Gastrocnemius medialis (tissue), 4 donors: ENCODE measurements at regions of chr2 and their contacts with region 1.

Region 1: DNA sequence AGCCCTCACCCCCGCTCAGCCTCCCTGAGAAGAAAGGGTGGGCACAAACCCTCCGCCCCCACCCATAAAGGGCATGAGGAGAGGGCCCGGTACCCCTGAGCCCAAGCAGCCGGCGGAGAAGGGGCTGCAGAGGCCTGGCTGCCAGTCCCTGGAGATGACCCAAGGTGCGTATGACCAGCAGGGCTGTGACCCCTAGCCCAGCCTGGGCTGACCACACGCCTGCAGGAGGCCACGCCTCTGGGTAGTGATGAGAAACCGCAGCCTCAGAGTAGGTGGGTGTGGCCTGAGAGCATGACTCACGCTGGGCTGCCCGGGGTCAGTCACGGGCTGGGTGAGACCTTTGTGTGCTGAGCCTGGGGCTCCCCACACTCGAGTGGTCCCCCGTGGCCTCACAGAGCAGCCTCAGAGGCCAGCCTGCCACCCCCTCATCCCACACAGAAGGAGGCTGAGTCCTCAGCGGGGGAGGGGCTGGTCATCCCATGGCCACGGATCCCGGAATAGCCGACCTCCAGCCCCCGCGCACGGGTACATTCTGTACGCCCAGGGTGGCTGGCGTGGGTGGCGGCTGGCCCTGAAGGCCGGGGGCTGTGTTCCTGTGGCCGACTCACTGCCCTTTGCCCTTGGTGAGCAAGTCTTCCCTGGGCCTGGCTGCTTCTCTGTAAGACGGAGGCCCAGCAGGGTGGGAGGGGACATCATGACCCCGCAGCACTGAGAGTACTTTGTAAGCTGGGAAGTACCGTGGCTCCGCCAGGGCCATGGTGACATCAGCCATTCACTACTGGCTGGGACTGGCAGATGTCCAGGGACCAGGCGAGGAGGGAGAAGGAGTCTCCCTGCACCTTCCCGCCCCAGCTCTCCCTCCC is 110.8 kb upstream of the OTOS start:
- DNase-seq: peak; percentile 91 to 97
- ATAC-seq: peak; percentile 79 to 82
- H3K4me3 ChIP-seq: peak overlapping the region; percentile 15 to 41 (median 32)
- H3K27ac ChIP-seq: peak overlapping the region; percentile 93 to 96 (median 95)
- H3K4me1 ChIP-seq: peaks cover 43 to 47% of the 10 kb centered on the region in 2 donors
- H3K27me3 ChIP-seq: no peaks in the 10 kb centered on the region
- CTCF ChIP-seq: no peak
- POLR2A ChIP-seq: peak; percentile 85

Region 2: DNA sequence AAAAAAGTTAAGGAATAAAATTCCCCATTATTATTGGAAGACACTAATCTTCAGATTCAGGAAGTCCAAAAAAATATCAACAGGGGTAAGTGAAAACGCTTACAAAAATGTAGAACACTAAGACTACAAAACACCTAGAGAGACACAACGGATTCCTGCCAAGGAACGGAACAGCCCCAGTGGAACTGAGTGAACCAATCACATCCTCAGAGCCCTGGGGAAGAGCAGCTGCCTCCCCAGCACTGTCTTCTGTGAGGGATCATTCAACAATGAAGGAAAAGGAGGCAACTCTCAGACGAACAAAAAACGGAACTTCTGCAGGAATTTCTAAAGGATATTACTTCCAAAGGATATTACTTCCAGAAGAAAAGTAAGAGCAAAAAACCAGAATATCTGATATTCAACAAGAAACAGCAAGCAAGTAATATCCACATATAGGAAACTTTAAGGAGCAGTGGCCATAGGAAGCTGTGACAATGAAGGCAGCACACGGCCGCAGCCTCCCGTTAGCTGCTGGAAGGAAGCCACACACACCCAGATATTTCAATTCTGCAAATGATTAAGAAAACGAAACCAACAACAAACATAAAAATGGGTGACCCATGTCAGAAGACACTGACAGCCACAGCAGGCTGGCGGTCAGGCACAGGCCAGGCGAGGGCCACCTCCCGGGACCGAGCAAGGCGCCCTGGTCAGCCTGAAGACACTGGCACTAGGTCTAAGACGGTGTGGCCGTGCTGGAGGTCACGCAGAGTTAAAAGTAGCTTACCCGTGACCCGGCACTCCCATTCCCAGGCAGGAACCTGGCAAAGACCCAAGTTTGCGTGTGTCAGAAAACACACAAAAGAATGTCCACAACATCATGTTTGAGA is 932.2 kb before region 1 on chr2:
- in situ Hi-C with region 1: no loop called
- intact Hi-C with region 1: loop called (anchors 10 kb)
- DNase-seq: peak in 1 of 2 donors; percentile 87
- ATAC-seq: peak; percentile 68 to 87
- H3K4me3 ChIP-seq: peak overlapping the region; percentile 43 to 45 (median 44)
- H3K27ac ChIP-seq: peak overlapping the region; percentile 82 to 93 (median 90)
- H3K4me1 ChIP-seq: peaks cover 43 to 48% of the 10 kb centered on the region in 2 donors
- H3K27me3 ChIP-seq: no peaks in the 10 kb centered on the region
- CTCF ChIP-seq: no peak
- POLR2A ChIP-seq: peak; percentile 72 to 78

Region 3: DNA sequence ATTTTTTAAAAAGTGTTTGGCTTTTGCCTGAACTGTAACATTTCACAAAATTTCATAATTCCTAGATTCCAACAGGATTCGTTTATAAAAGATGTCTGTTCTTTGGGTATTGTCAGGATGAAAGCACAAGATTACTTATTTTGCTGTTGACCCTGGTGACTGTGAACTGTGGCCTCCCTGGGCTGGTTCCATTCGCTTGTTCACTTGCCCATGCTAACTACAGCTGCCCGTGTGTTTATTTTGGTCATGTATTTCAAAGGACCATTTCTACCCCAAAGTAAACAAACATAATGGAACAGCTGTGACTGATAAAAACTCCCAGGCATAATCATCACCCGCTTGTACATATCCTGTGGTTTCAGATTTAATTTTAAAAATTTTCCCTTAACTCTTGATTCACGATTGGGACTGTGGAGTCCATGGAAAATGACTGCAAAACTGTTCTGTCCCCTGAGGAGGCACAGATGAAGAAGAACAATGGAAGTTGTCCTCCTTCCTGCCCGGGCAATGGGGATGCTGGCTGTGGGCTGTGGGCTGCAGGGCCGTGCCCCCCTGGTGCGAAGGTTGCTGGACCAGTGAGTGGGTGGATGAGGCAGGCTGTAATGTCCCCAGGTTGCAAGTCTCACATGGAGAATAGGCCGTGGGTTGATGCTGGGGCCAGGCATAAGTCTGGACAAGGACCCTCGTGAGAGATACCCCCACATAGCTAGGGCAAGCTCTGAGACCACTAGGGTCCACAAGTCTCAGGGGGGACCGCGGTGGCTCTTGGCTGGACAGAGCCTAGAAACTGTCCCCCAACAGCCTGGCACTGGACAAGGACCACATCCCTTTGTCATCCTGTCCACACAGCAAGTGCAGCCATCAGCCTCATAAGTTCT is 821.5 kb before region 1 on chr2:
- in situ Hi-C with region 1: no loop called
- intact Hi-C with region 1: no loop called
- DNase-seq: no peak
- ATAC-seq: no peak
- H3K4me3 ChIP-seq: no peak overlapping the region
- H3K27ac ChIP-seq: no peak overlapping the region
- H3K4me1 ChIP-seq: no peaks in the 10 kb centered on the region
- H3K27me3 ChIP-seq: no peaks in the 10 kb centered on the region
- CTCF ChIP-seq: no peak
- POLR2A ChIP-seq: no peak

Region 4: GRCh38 chr2:240560480-240561326 is 309.5 kb after region 1 on chr2:
- in situ Hi-C with region 1: no loop called
- intact Hi-C with region 1: loop called (anchors 5 kb)
- DNase-seq: peak; percentile 99
- ATAC-seq: peak; percentile 85 to 86
- H3K4me3 ChIP-seq: peak overlapping the region; percentile 77 to 94 (median 88)
- H3K27ac ChIP-seq: peak overlapping the region; percentile 97 to 100 (median 100)
- H3K4me1 ChIP-seq: peaks cover 31 to 40% of the 10 kb centered on the region in 2 donors
- H3K27me3 ChIP-seq: no peaks in the 10 kb centered on the region
- CTCF ChIP-seq: peak in 2 of 5 experiments; percentile 49 to 60
- POLR2A ChIP-seq: peak; percentile 86 to 91